H1 (cell line): ENCODE measurements at regions of chr3 and their contacts with region 1.

Region 1: DNA sequence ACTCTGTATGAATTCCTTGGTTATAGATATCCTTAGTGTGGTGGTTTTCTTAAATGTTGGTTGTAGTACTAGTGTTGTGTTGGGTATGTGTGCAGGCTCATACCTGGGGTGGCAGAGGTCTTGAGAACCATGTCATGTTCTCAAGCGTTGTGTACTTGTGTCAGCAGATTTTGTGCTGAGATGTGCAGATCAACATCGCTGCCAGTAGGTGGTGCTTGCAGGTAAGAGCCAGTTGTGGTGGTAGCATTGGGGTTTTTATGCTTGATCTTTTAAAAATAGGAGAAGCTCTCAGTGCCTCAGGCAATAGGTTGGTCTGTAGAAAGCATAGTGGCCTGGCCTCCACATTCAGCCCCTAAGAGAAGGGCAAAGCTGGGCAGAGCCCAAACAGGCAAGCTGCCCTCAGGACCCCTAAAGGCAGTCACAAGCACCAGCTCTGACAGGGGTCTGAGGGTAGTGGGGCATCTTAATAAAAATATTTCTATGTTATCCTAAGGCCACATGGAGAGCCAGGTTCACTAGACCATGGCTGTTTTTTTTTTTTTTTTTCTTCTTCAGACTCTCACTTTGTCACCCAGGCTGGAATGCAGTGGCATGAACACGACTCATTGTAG is 164.0 kb downstream of the IL20RB start:
- DNase-seq: no peak
- H3K4me3 ChIP-seq: no peak overlapping the region
- H3K27ac ChIP-seq: no peak overlapping the region
- H3K4me1 ChIP-seq: no peaks in the 10 kb centered on the region
- H3K27me3 ChIP-seq: no peaks in the 10 kb centered on the region
- CTCF ChIP-seq: peak; percentile 72 to 91 (median 83)
- EP300 ChIP-seq: no peak
- POLR2A ChIP-seq: no peak
- RAD21 ChIP-seq: peak; percentile 77 to 85

Region 2: DNA sequence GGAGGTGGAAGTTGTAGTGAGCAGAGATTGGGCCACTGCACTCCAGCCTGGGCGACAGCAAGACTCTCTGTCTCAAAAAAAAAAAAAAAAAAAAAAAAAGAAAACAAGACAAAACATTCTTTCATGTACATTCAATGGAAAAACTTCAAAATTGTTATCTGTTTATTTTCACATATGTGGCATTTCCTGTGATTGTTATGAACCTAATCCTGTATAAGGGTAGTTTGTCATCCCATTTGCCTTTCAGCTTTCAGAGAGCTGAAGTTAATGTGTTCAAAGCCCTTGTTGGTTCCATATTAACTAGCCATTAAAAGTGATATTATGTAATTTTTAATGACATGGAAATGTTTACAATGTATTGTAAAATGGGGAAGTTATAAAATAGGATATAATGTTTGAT is 277.1 kb before region 1 on chr3:
- CTCF ChIA-PET with region 1: no interaction called
- POLR2A ChIA-PET with region 1: no interaction called
- DNase-seq: no peak
- H3K4me3 ChIP-seq: no peak overlapping the region
- H3K27ac ChIP-seq: no peak overlapping the region
- H3K4me1 ChIP-seq: no peaks in the 10 kb centered on the region
- H3K27me3 ChIP-seq: no peaks in the 10 kb centered on the region
- CTCF ChIP-seq: no peak
- EP300 ChIP-seq: no peak
- POLR2A ChIP-seq: no peak
- RAD21 ChIP-seq: no peak

Region 3: GRCh38 chr3:137013955-137014688 is 107.7 kb before region 1 on chr3:
- CTCF ChIA-PET with region 1: no interaction called
- POLR2A ChIA-PET with region 1: no interaction called
- DNase-seq: peak; percentile 65 to 96
- H3K4me3 ChIP-seq: peak overlapping the region in 2 of 4 experiments; percentile 4 to 38; a peak in 3 of 8 replicates
- H3K27ac ChIP-seq: no peak overlapping the region
- H3K4me1 ChIP-seq: peaks cover 0 to 4% (median 0%) of the 10 kb centered on the region in 4 experiments; a peak in 1 of 7 replicates
- H3K27me3 ChIP-seq: no peaks in the 10 kb centered on the region
- CTCF ChIP-seq: peak; percentile 74 to 92 (median 81)
- EP300 ChIP-seq: no peak
- POLR2A ChIP-seq: no peak
- RAD21 ChIP-seq: peak; percentile 98 to 100

Region 4: GRCh38 chr3:137041251-137041650 is 80.6 kb before region 1 on chr3:
- CTCF ChIA-PET with region 1: interaction called, 12 read pairs
- POLR2A ChIA-PET with region 1: no interaction called
- DNase-seq: no peak
- H3K4me3 ChIP-seq: no peak overlapping the region
- H3K27ac ChIP-seq: no peak overlapping the region
- H3K4me1 ChIP-seq: 0 out of 7 replicates have a peak, but pooled peaks cover 0 to 3% (median under 1%) of the 10 kb centered on the region in 4 experiments
- H3K27me3 ChIP-seq: no peaks in the 10 kb centered on the region
- CTCF ChIP-seq: no peak
- EP300 ChIP-seq: no peak
- POLR2A ChIP-seq: no peak
- RAD21 ChIP-seq: no peak